Aorta (tissue), 5 donors: ENCODE measurements at regions of chr1 and their contacts with region 1.

Region 1: GRCh38 chr1:35883635-35884109 is 663 bp downstream of the AGO1 start:
- DNase-seq: peak; percentile 70 to 85
- ATAC-seq: peak; percentile 49
- H3K4me3 ChIP-seq: peak overlapping the region; percentile 66 to 85
- H3K27ac ChIP-seq: peak overlapping the region in 1 of 2 donors; percentile 55
- H3K4me1 ChIP-seq: no peaks in the 10 kb centered on the region
- H3K27me3 ChIP-seq: no peaks in the 10 kb centered on the region

Region 2: DNA sequence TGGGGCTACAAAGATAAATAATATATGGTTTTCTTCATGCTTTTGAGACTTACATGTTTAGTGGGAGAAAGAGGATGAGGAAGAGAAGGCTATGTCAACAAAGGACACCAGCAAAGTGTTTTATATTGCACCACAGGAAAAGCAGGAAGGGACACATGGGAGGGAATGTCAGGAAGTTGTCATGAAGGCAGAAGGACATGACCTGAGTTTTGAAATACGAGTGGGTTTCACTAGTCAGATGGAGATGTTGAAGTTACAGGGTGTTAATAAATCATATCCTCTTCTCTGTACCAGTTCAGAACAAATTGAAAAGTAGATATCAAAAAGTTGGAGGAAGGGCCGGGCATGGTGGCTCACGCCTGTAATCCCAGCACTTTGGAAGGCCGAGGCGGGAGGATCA is 18.9 kb before region 1 on chr1:
- intact Hi-C with region 1: no loop called
- DNase-seq: no peak
- ATAC-seq: no peak
- H3K4me3 ChIP-seq: no peak overlapping the region
- H3K27ac ChIP-seq: no peak overlapping the region
- H3K4me1 ChIP-seq: no peaks in the 10 kb centered on the region
- H3K27me3 ChIP-seq: no peaks in the 10 kb centered on the region

Region 3: GRCh38 chr1:36088575-36089443 is 205.1 kb after region 1 on chr1 and contains the start of gene ADPRS:
- intact Hi-C with region 1: loop called in 1 of 2 experiments (anchors 2 kb)
- DNase-seq: peak; percentile 94 to 97
- ATAC-seq: peak; percentile 94
- H3K4me3 ChIP-seq: peak within 1 kb of the TSS; percentile 59 to 64
- H3K27ac ChIP-seq: peak within 1 kb of the TSS in 1 of 2 donors; percentile 33
- H3K4me1 ChIP-seq: no peaks in the 10 kb centered on the region
- H3K27me3 ChIP-seq: no peaks in the 10 kb centered on the region
- total RNA-seq, gene ADPRS: 15.9 to 21.2 TPM